ENCODE measurements at regions of chr6 and their contacts with region 1.

Region 1: GRCh38 chr6:30013291-30013922 is 47.7 kb upstream of the POLR1H start:
- DNase-seq: peak in 1 of 7 donors; percentile 30
- H3K4me3 ChIP-seq: no peak overlapping the region
- H3K27ac ChIP-seq: no peak overlapping the region
- H3K4me1 ChIP-seq: no peaks in the 10 kb centered on the region
- H3K27me3 ChIP-seq: no peaks in the 10 kb centered on the region
- CTCF ChIP-seq: peak; percentile 12 to 91 (median 48)
- POLR2A ChIP-seq: no peak

Region 2: DNA sequence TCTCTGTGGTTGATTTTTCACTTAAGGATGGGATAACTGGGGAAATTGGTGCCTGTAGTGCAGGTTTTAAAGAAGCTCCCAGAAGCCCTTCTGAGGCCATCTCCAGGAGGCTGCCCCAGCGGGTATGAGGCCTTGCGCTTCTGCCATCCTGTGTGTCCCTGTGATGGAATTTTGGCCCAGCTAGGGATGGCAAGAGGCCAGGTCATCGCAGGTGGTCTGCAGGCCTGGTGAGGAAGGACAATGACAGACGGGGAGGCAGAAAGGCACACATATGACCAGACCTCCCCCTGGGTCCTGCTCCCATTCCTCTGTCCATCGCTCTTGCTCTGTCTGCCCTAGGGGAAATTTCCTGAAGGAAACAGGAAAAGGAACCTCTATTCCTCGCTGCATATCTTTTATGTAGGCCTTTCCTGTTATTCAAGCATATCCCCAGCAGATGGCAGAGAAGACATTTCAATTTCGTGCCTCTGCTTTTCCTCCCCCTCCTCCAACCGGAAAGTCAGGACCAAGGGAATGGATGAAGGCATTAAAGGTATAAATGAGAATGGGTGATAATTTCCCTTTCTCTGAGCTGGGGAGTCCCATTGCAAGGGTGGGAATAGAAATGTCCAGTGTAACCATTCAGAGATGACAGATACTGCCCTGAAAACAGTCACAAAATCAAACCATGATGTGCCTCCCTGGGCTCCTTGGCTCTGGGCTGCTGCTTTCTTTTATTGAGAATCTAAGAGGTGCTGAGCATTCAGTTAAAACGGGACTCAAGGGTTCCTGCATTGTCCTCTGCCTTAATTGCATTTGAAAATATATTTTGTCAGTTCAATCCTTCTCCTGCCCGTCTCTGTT is 307.8 kb before region 1 on chr6:
- intact Hi-C with region 1: loop called in 1 of 2 experiments (anchors 10 kb)
- DNase-seq: peak; percentile 37 to 64 (median 47)
- H3K4me3 ChIP-seq: no peak overlapping the region
- H3K27ac ChIP-seq: no peak overlapping the region
- H3K4me1 ChIP-seq: no peaks in the 10 kb centered on the region
- H3K27me3 ChIP-seq: peaks cover 8% of the 10 kb centered on the region
- CTCF ChIP-seq: peak; percentile 46 to 80 (median 68)
- POLR2A ChIP-seq: no peak

Region 3: DNA sequence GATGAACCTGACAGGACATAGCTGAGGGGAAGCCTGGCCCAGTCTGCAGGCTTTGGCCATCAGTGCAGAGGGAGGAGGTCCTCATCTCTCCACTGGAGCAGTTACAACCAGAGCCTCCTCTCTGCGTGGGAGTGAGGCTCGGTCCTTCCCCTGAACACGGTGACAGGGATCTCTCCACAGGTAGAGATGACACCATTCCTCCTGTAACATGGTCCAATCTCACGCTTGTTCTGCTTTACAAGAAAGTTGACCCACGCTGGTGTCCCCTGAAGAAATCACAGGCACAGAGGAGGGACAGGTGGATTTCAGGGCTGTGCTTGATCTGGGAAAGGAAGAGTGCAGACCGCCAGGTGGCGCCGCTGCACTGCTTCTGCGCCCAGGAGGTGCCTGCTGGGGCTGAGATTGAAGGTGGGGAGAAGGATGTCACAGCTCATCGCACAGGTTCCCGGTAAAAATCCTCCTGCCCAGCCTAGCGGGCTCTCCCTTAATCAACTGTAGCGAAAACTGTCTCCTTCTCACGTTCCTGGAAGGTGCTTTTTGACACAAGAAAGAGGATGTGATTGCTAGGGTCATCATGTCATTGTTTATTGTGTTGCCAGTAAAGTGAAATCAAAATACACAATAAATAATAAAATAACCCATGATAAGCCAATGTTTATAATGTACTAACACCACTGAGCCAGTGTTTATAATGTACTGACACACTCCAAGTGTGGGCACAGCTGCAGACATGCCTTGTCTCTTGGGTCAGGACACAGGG is 165.4 kb before region 1 on chr6:
- intact Hi-C with region 1: loop called (anchors 2 kb)
- DNase-seq: peak; percentile 68 to 91 (median 78)
- H3K4me3 ChIP-seq: no peak overlapping the region
- H3K27ac ChIP-seq: no peak overlapping the region
- H3K4me1 ChIP-seq: peaks cover 0 to 13% of the 10 kb centered on the region in 2 donors
- H3K27me3 ChIP-seq: peaks cover 48% of the 10 kb centered on the region
- CTCF ChIP-seq: peak; percentile 82 to 98 (median 94)
- POLR2A ChIP-seq: no peak

Region 4: GRCh38 chr6:30154709-30155519 is 141.5 kb after region 1 on chr6:
- intact Hi-C with region 1: no loop called
- DNase-seq: peak in 3 of 7 donors; percentile 27 to 30 (median 29)
- H3K4me3 ChIP-seq: no peak overlapping the region
- H3K27ac ChIP-seq: no peak overlapping the region
- H3K4me1 ChIP-seq: no peaks in the 10 kb centered on the region
- H3K27me3 ChIP-seq: peaks cover 10% of the 10 kb centered on the region
- CTCF ChIP-seq: no peak
- POLR2A ChIP-seq: no peak